Aorta (tissue), 5 donors: ENCODE measurements at regions of chr12 and their contacts with region 1.

Region 1: DNA sequence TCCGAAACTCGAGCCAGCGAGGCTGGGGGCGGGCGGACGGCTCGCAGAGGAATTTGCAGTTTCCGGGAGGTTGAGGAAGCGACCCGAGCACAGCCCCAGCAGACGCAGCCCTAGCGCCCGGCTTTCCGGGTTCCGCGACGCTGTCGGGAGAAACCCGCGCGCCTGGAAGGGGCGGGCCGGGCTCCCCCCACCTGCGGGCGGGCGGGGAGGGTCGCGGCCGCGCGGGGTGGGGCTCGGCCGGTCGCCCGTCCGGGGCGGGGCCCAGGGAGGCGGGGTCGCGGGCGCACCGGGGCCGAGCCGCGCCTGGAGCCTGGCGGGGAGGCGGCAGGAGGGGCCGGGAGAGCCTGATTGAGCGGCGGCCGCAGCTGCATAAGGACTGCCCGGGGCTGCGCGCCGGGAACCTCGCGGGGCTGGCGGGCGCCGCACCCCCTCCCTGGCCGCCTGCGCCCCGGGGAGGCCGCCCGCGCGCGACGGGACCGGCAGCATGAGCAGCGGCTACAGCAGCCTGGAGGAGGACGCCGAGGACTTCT is at the start of gene RASSF3:
- DNase-seq: peak; percentile 83 to 91
- ATAC-seq: peak; percentile 83
- H3K4me3 ChIP-seq: peak within 1 kb of the TSS; percentile 83 to 96
- H3K27ac ChIP-seq: peak within 1 kb of the TSS; percentile 43 to 94
- H3K4me1 ChIP-seq: no peaks in the 10 kb centered on the region
- H3K27me3 ChIP-seq: no peaks in the 10 kb centered on the region
- total RNA-seq, gene RASSF3: 197 to 418 TPM

Region 2: DNA sequence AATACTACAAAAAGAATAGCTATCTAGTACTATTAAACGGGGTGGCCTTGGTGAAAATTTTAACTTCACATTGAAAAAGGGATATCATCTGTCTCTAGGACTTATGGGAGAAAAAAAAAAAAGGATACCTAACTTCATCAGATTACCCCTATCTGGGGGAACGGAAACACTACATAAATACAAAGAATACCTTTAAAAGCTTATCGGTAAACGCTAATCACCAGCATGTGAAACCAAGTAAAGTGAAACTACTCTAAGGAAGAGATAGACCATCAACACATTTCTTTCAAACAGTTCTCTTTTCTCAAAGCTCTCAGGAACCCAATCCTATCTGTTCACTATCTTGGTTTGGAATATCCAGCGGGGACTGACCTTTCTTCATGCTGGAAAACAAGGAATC is 391.6 kb before region 1 on chr12:
- intact Hi-C with region 1: no loop called
- DNase-seq: no peak
- ATAC-seq: no peak
- H3K4me3 ChIP-seq: no peak overlapping the region
- H3K27ac ChIP-seq: no peak overlapping the region
- H3K4me1 ChIP-seq: peaks cover 0 to 2% of the 10 kb centered on the region in 2 donors
- H3K27me3 ChIP-seq: no peaks in the 10 kb centered on the region

Region 3: DNA sequence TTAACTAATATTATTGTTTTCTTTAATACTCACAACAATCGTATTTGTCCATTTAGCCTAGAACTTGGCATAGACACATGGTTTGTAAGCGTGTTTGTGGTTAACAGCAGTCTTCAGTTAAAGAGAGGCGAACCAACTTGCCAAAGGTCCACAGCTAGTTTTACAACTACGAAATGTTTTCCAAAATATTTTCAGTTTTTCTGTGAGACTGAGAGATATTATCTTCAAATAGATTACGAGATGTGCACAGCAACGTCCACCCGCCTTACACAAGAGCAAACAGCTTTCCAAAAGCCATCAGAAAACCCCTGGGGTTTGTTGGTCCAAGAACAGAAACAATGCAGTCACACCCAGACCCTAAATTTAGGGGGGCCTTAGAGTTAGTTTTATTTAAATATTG is 58.5 kb before region 1 on chr12:
- intact Hi-C with region 1: loop called (anchors 5 kb)
- DNase-seq: no peak
- ATAC-seq: peak; percentile 26
- H3K4me3 ChIP-seq: no peak overlapping the region
- H3K27ac ChIP-seq: no peak overlapping the region
- H3K4me1 ChIP-seq: no peaks in the 10 kb centered on the region
- H3K27me3 ChIP-seq: no peaks in the 10 kb centered on the region

Region 4: DNA sequence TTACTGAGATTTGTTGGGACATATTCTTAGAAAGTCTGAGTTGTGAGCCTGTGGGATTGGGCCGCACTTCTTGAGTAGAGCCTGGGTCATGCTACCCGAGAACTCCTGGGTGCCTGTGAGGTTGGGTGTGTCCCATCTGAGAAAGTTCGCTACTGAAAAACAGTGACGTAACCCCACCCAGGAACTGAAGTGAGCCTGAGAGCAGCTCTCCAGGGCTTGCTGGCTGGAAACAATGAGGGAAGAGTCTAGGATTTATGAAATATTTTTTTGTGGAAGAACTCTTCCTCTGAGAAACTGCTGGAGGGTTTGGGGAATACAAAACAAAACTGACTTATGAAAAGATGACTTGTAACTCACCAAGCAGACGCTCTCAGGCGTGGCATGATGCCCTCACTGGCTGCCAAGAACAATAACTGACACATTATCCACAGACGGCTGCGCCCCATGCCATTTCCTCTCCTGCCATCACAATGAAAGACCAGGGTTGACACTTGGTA is 69.3 kb after region 1 on chr12:
- intact Hi-C with region 1: loop called in 1 of 2 experiments (anchors 5 kb)
- DNase-seq: peak; percentile 88 to 89
- ATAC-seq: peak; percentile 59
- H3K4me3 ChIP-seq: no peak overlapping the region
- H3K27ac ChIP-seq: peak overlapping the region; percentile 92 to 93
- H3K4me1 ChIP-seq: peaks cover 6 to 13% of the 10 kb centered on the region in 2 donors
- H3K27me3 ChIP-seq: no peaks in the 10 kb centered on the region

Region 5: GRCh38 chr12:64687816-64688215 is 77.6 kb after region 1 on chr12:
- intact Hi-C with region 1: loop called in 1 of 2 experiments (anchors 5 kb)
- DNase-seq: no peak
- ATAC-seq: no peak
- H3K4me3 ChIP-seq: no peak overlapping the region
- H3K27ac ChIP-seq: peak overlapping the region; percentile 5 to 37
- H3K4me1 ChIP-seq: peaks cover 0 to 6% of the 10 kb centered on the region in 2 donors
- H3K27me3 ChIP-seq: no peaks in the 10 kb centered on the region

Region 6: DNA sequence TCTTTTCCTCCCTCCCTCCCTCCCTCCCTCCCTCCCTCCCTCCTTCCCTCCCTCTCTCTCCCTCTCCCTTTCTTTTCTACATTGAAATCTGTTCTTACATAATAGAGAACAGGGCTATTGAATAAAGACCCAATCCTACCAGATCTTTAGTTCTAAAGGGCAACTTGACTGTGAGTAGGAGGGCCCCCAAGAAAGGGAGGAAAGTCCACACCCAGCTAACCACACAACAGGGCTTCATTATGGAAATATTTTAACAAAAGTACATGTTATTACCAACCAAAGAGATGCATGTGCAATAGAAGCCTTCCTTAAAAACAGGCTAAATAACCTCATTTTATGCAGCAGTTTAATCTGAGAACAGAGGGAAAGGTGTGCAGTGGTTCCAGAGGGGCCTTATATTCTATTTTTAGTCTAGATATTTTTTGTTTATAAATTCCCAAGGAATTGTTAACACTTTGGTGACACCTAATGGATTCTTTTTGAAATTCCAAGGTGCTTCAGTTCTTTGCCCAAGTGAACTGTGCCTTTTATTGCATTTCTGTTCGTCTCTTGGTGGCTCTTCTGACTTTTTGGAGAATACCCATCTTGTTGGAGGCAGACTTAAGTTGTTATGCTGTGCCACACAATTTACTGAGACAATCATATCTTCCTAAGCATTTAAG is 86.0 kb after region 1 on chr12:
- intact Hi-C with region 1: loop called in 1 of 2 experiments (anchors 5 kb)
- DNase-seq: no peak
- ATAC-seq: no peak
- H3K4me3 ChIP-seq: no peak overlapping the region
- H3K27ac ChIP-seq: no peak overlapping the region
- H3K4me1 ChIP-seq: peaks cover 0 to 4% of the 10 kb centered on the region in 2 donors
- H3K27me3 ChIP-seq: no peaks in the 10 kb centered on the region